A549 (cell line): ENCODE measurements at regions of chr18 and their contacts with region 1.

Region 1: DNA sequence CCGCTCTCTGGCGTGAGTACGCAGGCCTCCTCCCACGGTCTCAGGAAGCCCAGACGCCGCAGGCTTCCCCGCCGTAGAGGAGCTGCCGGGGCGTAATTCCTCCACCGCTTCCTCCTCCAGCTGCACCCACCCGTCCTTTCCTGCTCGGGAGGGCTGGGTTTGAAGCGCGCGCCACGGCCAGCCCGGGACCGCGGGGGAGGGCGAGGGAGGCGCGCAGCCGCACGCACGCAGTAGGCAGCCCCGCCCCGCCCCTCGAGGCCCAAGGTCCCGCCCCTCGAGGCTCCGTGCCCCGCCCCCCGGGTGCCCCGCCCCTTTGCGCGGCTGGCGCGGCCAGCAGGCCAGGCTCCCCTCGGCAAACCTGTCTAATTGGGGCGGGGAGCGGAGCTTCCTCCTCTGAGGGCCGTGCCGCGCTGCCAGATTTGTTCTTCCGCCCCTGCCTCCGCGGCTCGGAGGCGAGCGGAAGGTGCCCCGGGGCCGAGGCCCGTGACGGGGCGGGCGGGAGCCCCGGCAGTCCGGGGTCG is at the start of gene MALT1:
- DNase-seq: peak; percentile 55 to 88
- ATAC-seq: peak; percentile 79 to 92
- H3K4me3 ChIP-seq: peak within 1 kb of the TSS; percentile 90
- H3K27ac ChIP-seq: peak within 1 kb of the TSS; percentile 97
- H3K4me1 ChIP-seq: peaks cover 76% of the 10 kb centered on the region
- CTCF ChIP-seq: no peak
- EP300 ChIP-seq: no peak
- POLR2A ChIP-seq: peak; percentile 56
- RAD21 ChIP-seq: 0 out of 5 replicates have a peak, but pooled peaks of 1 of the 2 experiments have one; percentile 14
- polyA plus RNA-seq, gene MALT1: 30.0 and 30.7 TPM in 2 replicates

Region 2: GRCh38 chr18:58578321-58578720 is 92.8 kb before region 1 on chr18:
- CTCF ChIA-PET with region 1: no interaction called
- POLR2A ChIA-PET with region 1: interaction called, 14 read pairs
- DNase-seq: no peak
- ATAC-seq: no peak
- H3K4me3 ChIP-seq: peak overlapping the region; percentile 58
- H3K27ac ChIP-seq: peak overlapping the region; percentile 80 to 91
- H3K4me1 ChIP-seq: peaks cover 29% of the 10 kb centered on the region
- CTCF ChIP-seq: no peak
- EP300 ChIP-seq: no peak
- POLR2A ChIP-seq: no peak
- RAD21 ChIP-seq: no peak

Region 3: GRCh38 chr18:58611471-58612131 is 59.6 kb before region 1 on chr18:
- CTCF ChIA-PET with region 1: no interaction called
- POLR2A ChIA-PET with region 1: interaction called, 10 read pairs
- DNase-seq: peak in 1 of 2 experiments; percentile 20
- ATAC-seq: peak; percentile 64 to 76; a peak in 5 of 6 replicates
- H3K4me3 ChIP-seq: no peak overlapping the region
- H3K27ac ChIP-seq: peak overlapping the region; percentile 71 to 88
- H3K4me1 ChIP-seq: peaks cover 22% of the 10 kb centered on the region
- CTCF ChIP-seq: no peak
- EP300 ChIP-seq: peak in 1 of 2 experiments; percentile 76; a peak in 2 of 5 replicates
- POLR2A ChIP-seq: no peak
- RAD21 ChIP-seq: 0 out of 5 replicates have a peak, but pooled peaks of 1 of the 2 experiments have one; percentile 5

Region 4: DNA sequence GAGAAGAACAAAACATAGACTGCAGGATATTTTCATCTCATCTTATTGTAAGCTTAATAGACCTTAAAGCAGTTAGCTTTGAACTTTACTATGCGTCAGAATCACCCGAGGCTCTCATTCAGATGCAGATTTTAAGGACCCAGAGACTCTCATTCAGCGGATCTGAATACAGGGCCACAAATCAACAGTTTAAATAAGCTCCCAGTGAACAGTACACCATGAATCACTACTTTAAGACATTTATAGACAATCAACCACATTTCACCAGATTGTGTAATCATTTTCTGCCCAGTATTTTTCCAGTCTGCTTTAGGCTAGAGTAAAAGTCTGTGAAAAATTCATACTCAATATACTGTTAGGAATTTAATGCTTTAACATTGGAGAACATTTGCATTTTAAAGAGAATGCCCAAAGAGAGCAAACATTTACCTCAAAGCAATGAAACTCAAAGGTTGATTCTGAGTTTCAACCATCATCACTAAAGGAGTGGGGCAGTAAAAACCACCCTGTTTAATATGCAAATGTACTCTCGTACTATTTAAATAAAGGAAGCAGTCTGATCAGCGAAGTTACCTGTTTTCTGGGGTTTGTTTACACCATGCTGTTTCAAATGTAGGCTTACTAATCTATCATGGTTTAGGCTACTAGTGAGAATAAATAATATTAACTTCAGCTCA is 31.3 kb before region 1 on chr18:
- CTCF ChIA-PET with region 1: no interaction called
- POLR2A ChIA-PET with region 1: interaction called, 10 read pairs
- DNase-seq: no peak
- ATAC-seq: peak in 1 of 2 experiments; percentile 50; a peak in 2 of 6 replicates
- H3K4me3 ChIP-seq: no peak overlapping the region
- H3K27ac ChIP-seq: peak overlapping the region; percentile 54 to 89
- H3K4me1 ChIP-seq: peaks cover 53% of the 10 kb centered on the region
- CTCF ChIP-seq: no peak
- EP300 ChIP-seq: no peak
- POLR2A ChIP-seq: no peak
- RAD21 ChIP-seq: no peak